ENCODE measurements at regions of chr1 and their contacts with region 1.

Region 1: DNA sequence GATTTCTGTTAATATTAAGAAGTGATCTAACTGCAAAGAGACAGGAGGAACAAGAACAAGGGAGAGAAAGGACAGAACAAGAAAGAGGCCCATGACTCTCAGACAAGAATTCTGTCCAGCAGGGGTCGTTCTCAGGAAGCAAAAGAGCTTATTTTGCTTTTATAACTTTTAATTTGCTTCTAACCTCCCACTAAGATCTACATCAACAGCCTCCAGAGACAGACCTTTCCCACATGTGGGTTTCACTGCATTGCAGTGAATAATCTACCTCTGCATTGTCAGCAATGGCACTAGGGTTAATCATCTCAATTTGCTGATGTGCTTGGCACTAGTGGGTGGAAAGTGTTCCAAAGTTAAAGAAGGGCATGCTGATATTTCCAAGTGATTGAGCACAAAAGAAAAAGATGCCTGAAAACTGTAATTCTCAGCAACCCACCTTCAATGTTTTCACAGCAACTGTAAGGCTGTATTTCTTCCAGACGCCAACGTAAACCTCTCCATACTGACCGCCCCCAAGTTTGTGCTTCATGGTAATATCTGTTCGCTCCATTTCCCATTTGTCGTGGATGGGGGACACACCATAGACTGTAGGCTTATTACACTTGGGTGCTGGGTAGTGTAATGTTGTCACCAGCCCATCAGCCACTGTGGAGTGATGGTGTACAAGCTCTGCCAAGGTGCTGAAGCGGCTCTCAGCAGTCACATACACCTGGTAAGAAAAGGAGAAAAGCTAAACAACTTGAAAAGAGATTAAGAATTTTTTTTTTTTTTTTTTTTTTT is 39.5 kb downstream of the TOR3A start:
- DNase-seq: no peak
- ATAC-seq: peak in 1 of 2 donors; percentile 51
- H3K4me3 ChIP-seq: no peak overlapping the region
- H3K27ac ChIP-seq: no peak overlapping the region
- H3K4me1 ChIP-seq: no peaks in the 10 kb centered on the region
- H3K27me3 ChIP-seq: no peaks in the 10 kb centered on the region
- CTCF ChIP-seq: peak; percentile 44 to 60 (median 52)
- POLR2A ChIP-seq: no peak

Region 2: GRCh38 chr1:179197690-179198297 is 76.4 kb after region 1 on chr1:
- in situ Hi-C with region 1: loop called in 1 of 4 experiments (anchors 5 kb)
- intact Hi-C with region 1: loop called (anchors 5 kb)
- DNase-seq: no peak
- ATAC-seq: no peak
- H3K4me3 ChIP-seq: no peak overlapping the region
- H3K27ac ChIP-seq: no peak overlapping the region
- H3K4me1 ChIP-seq: peaks cover 11 to 12% of the 10 kb centered on the region in 2 donors
- H3K27me3 ChIP-seq: no peaks in the 10 kb centered on the region
- CTCF ChIP-seq: no peak
- POLR2A ChIP-seq: no peak